IMR-90 (cell line): ENCODE measurements at regions of chr7 and their contacts with region 1.

Region 1: DNA sequence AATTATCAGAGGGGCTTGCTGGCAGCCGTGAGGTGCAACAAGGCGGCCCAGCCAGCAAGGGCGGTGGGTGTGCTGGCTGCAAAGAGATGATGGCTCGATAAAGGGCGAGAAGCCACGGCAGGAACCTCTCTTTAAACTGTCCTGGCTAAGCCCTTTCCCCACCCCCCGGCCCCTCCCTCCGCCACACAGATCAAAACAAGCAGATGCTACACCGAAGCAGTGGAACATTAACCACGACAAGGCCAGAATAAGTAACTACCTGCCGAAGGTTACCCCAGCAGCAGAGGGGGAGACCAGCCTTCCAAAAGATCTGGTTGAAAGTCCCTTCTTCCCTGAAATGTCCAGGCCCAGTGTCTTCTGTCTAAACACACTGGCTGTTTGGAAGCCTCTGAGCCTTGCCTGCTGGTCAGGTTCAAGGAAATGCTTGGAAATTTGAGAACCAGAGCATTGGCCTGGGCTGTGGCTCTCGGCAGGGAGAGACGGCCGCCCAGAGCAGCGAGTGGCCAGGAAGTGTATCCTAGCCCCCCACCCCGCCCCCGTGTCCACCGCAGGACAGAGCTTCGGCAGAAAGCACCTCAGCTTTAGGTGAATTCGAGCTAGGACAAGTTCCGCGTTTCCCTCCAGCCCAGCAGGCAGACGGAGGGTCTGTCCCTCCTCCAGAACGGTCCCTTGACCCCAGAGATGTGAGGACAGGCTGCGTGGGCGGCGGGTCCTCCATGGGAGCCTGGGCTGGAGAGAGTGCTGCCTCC is 2.1 kb downstream of the FAM20C start:
- DNase-seq: peak; percentile 48
- ATAC-seq: no peak
- H3K4me3 ChIP-seq: peak overlapping the region; percentile 78
- H3K27ac ChIP-seq: peak overlapping the region; percentile 79
- H3K4me1 ChIP-seq: peaks cover 25% of the 10 kb centered on the region
- H3K27me3 ChIP-seq: no peaks in the 10 kb centered on the region
- CTCF ChIP-seq: no peak
- POLR2A ChIP-seq: no peak
- RAD21 ChIP-seq: no peak

Region 2: DNA sequence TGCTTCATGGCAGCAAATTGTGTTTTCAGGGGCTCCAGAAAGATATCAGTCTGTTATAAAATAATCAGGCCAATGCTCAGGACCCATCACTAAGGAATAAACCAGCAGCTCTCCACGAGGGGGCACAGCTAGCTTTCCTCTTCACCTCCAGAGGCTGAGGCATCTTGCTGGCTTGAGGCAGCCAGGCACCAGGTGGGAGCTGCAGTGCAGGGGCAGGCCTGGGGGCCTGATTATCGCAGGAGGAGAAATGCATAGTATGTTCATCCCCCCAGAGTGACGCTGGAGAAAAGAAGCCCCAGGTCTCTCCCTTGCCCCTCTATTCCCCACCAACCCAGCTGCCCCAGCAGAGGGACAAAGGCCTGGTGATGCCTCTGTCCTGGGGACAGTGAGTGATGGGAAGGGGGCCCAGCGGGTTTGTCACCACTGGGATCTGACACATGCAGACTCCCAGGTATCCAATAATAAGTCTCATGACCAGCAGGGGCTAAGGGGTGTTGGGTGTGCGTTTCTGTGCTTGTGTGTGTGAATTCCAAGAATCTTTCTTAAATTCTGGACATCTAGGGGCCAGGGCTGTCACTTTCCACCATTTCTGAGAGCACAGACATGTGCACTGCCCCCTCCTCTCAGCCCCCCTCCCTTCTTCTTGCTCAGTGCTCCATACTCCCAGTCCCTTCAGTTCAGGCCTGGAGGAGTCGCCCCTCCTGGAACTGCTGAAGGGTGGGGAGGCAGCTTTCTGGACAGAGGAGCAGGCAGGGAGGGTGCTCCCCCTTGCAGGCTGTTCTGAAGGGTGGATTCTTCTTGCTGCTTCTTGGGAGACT is 130.1 kb before region 1 on chr7:
- CTCF ChIA-PET with region 1: interaction called, 6 read pairs
- POLR2A ChIA-PET with region 1: no interaction called
- dilution Hi-C with region 1: no loop called
- in situ Hi-C with region 1: no loop called
- intact Hi-C with region 1: loop called (anchors 1 kb)
- DNase-seq: peak; percentile 74
- ATAC-seq: peak; percentile 92
- H3K4me3 ChIP-seq: no peak overlapping the region
- H3K27ac ChIP-seq: no peak overlapping the region
- H3K4me1 ChIP-seq: peaks cover 16% of the 10 kb centered on the region
- H3K27me3 ChIP-seq: no peaks in the 10 kb centered on the region; the same call in 1 of the 2 replicates
- CTCF ChIP-seq: peak; percentile 85
- POLR2A ChIP-seq: no peak
- RAD21 ChIP-seq: peak; percentile 91

Region 3: GRCh38 chr7:218316-218715 is 23.9 kb after region 1 on chr7:
- CTCF ChIA-PET with region 1: no interaction called
- POLR2A ChIA-PET with region 1: no interaction called
- dilution Hi-C with region 1: no loop called
- in situ Hi-C with region 1: no loop called
- intact Hi-C with region 1: no loop called
- DNase-seq: no peak
- ATAC-seq: no peak
- H3K4me3 ChIP-seq: no peak overlapping the region
- H3K27ac ChIP-seq: no peak overlapping the region
- H3K4me1 ChIP-seq: peaks cover 16% of the 10 kb centered on the region
- H3K27me3 ChIP-seq: no peaks in the 10 kb centered on the region
- CTCF ChIP-seq: no peak
- POLR2A ChIP-seq: no peak
- RAD21 ChIP-seq: no peak

Region 4: GRCh38 chr7:229184-229964 is 34.9 kb after region 1 on chr7:
- CTCF ChIA-PET with region 1: no interaction called
- POLR2A ChIA-PET with region 1: interaction called, 3 read pairs
- dilution Hi-C with region 1: no loop called
- in situ Hi-C with region 1: no loop called
- intact Hi-C with region 1: loop called (anchors 1 kb)
- DNase-seq: peak; percentile 97
- ATAC-seq: peak; percentile 77
- H3K4me3 ChIP-seq: no peak overlapping the region
- H3K27ac ChIP-seq: peak overlapping the region; percentile 97
- H3K4me1 ChIP-seq: peaks cover 72% of the 10 kb centered on the region
- H3K27me3 ChIP-seq: no peaks in the 10 kb centered on the region
- CTCF ChIP-seq: 0 out of 2 replicates have a peak, but pooled peaks have one; percentile 18
- POLR2A ChIP-seq: no peak
- RAD21 ChIP-seq: no peak